B cell (primary cell): ENCODE measurements at regions of chr17 and their contacts with region 1.

Region 1: GRCh38 chr17:76467366-76467765 is at the start of gene AANAT:
- DNase-seq: no peak
- ATAC-seq: no peak
- H3K4me3 ChIP-seq: no peak within 1 kb of the TSS
- H3K4me3 Mint-ChIP-seq: no peak within 1 kb of the TSS
- H3K27ac ChIP-seq: peak within 1 kb of the TSS in 1 of 2 donors; percentile 23
- H3K27ac Mint-ChIP-seq: peak within 1 kb of the TSS; percentile 84
- H3K4me1 ChIP-seq: peaks cover 12 to 36% of the 10 kb centered on the region in 2 donors
- H3K4me1 Mint-ChIP-seq: peaks cover 35% of the 10 kb centered on the region
- H3K27me3 ChIP-seq: no peaks in the 10 kb centered on the region
- H3K27me3 Mint-ChIP-seq: no peaks in the 10 kb centered on the region
- CTCF ChIP-seq: no peak
- total RNA-seq, gene AANAT: 0.94 TPM in 1 of 2 replicates, not detected in the other

Region 2: DNA sequence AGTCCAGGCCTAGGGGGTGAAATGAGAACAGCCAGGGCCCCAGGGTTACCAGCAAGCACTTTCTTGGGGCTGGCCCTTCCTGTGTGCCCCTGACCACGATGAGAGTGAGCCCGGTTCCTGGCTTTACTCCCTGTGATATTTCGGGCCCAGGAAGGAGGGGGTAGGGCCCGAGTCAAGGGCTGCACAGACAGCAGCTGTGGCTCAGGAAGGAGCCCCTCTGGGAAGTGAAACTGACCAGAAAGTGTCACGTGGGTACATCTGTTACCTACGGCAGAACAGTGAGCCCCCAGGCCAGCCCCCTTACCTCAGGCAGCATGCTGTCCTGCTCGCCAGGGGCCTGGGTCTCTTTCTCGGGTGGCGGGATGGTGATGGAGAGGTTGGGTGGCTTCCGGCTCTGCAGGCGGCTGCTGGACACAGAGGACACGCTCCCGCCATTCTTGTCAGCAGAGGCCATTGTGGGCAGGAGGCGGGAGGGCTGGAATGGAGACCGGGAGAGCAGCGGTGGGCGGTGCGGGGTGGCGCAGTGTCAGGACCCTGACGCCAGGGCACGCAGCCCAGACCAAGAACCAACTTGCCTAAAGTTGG is 13.8 kb after region 1 on chr17:
- CTCF ChIA-PET with region 1: interaction called, 25 read pairs
- POLR2A ChIA-PET with region 1: interaction called, 13 read pairs
- intact Hi-C with region 1: loop called (anchors 1 kb)
- DNase-seq: peak; percentile 88
- ATAC-seq: peak; percentile 57
- H3K4me3 ChIP-seq: peak overlapping the region; percentile 15 to 70 (median 53)
- H3K4me3 Mint-ChIP-seq: peak overlapping the region; percentile 81
- H3K27ac ChIP-seq: peak overlapping the region; percentile 91 to 96
- H3K27ac Mint-ChIP-seq: peak overlapping the region; percentile 99
- H3K4me1 ChIP-seq: peaks cover 63 to 87% of the 10 kb centered on the region in 2 donors
- H3K4me1 Mint-ChIP-seq: peaks cover 67% of the 10 kb centered on the region
- H3K27me3 ChIP-seq: no peaks in the 10 kb centered on the region
- H3K27me3 Mint-ChIP-seq: no peaks in the 10 kb centered on the region
- CTCF ChIP-seq: no peak

Region 3: GRCh38 chr17:76492989-76493501 is 25.7 kb after region 1 on chr17:
- CTCF ChIA-PET with region 1: interaction called, 442 read pairs
- POLR2A ChIA-PET with region 1: interaction called, 478 read pairs
- intact Hi-C with region 1: no loop called
- DNase-seq: peak; percentile 83
- ATAC-seq: peak; percentile 50
- H3K4me3 ChIP-seq: peak overlapping the region; percentile 16 to 60 (median 50)
- H3K4me3 Mint-ChIP-seq: peak overlapping the region; percentile 89
- H3K27ac ChIP-seq: peak overlapping the region; percentile 75 to 94
- H3K27ac Mint-ChIP-seq: peak overlapping the region; percentile 98
- H3K4me1 ChIP-seq: peaks cover 87 to 98% of the 10 kb centered on the region in 2 donors
- H3K4me1 Mint-ChIP-seq: peaks cover 93% of the 10 kb centered on the region
- H3K27me3 ChIP-seq: no peaks in the 10 kb centered on the region
- H3K27me3 Mint-ChIP-seq: no peaks in the 10 kb centered on the region
- CTCF ChIP-seq: no peak

Region 4: GRCh38 chr17:76501018-76501826 is 33.9 kb after region 1 on chr17 and contains the start of gene RHBDF2:
- CTCF ChIA-PET with region 1: interaction called, 442 read pairs
- POLR2A ChIA-PET with region 1: interaction called, 478 read pairs
- intact Hi-C with region 1: loop called (anchors 1 kb)
- DNase-seq: peak; percentile 95
- ATAC-seq: peak; percentile 85
- H3K4me3 ChIP-seq: peak within 1 kb of the TSS; percentile 46 to 97 (median 95)
- H3K4me3 Mint-ChIP-seq: peak within 1 kb of the TSS; percentile 97
- H3K27ac ChIP-seq: peak within 1 kb of the TSS; percentile 78 to 94
- H3K27ac Mint-ChIP-seq: peak within 1 kb of the TSS; percentile 99
- H3K4me1 ChIP-seq: peaks cover 38 to 63% of the 10 kb centered on the region in 2 donors
- H3K4me1 Mint-ChIP-seq: peaks cover 56% of the 10 kb centered on the region
- H3K27me3 ChIP-seq: no peaks in the 10 kb centered on the region
- H3K27me3 Mint-ChIP-seq: no peaks in the 10 kb centered on the region
- CTCF ChIP-seq: no peak
- total RNA-seq, gene RHBDF2: 482 and 509 TPM in 2 replicates

Region 5: DNA sequence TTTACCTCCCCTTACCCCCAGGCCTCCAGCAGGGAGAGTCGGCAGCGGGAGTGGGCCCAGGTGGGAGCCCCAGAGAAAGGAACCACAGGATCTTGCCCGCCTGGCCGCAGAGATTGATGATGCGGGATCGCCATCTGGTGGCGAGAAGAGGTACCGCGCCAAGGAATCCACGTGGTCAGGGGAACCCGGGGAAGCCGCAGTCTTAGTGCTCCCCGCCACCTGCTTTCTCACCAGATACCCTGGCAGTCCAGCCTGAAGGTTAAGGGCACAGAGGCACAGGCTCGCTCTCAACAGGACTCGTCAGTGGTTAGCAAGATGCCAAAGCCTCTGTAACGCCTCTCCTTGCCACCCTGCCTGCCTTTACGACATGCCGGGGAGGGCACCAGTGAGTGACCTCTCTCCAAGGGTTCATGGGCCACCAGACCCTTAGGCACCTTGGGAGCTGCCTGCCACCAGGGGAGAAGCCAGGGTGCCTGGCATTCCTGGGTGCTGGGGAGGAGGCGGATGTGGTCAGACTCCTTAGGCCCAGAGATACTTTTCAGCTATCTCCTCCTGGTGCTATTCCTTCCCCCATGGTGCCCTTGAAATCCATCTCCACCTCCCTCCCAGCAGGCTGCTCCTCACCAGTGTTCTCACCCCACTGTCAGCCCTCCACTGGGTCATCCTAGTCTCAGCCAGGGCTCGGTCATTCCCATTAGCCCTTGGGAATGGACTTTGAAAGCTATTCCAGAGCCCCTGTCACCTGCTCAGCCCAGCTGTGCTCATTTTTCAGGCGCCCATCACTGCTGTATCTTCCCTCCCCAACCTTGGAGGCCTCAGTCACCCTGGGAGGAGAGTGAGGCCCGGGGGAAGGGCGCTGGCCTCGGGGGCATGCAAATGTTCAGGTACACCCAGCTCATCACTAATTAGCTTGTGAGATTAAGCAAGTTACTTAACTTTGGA is 39.3 kb after region 1 on chr17:
- CTCF ChIA-PET with region 1: interaction called, 442 read pairs
- POLR2A ChIA-PET with region 1: interaction called, 478 read pairs
- intact Hi-C with region 1: loop called (anchors 1 kb)
- DNase-seq: peak; percentile 92
- ATAC-seq: peak; percentile 73
- H3K4me3 ChIP-seq: no peak overlapping the region
- H3K4me3 Mint-ChIP-seq: no peak overlapping the region
- H3K27ac ChIP-seq: no peak overlapping the region
- H3K27ac Mint-ChIP-seq: peak overlapping the region; percentile 50
- H3K4me1 ChIP-seq: peaks cover 14 to 28% of the 10 kb centered on the region in 2 donors
- H3K4me1 Mint-ChIP-seq: peaks cover 28% of the 10 kb centered on the region
- H3K27me3 ChIP-seq: no peaks in the 10 kb centered on the region
- H3K27me3 Mint-ChIP-seq: peaks cover 2% of the 10 kb centered on the region
- CTCF ChIP-seq: peak; percentile 87

Region 6: DNA sequence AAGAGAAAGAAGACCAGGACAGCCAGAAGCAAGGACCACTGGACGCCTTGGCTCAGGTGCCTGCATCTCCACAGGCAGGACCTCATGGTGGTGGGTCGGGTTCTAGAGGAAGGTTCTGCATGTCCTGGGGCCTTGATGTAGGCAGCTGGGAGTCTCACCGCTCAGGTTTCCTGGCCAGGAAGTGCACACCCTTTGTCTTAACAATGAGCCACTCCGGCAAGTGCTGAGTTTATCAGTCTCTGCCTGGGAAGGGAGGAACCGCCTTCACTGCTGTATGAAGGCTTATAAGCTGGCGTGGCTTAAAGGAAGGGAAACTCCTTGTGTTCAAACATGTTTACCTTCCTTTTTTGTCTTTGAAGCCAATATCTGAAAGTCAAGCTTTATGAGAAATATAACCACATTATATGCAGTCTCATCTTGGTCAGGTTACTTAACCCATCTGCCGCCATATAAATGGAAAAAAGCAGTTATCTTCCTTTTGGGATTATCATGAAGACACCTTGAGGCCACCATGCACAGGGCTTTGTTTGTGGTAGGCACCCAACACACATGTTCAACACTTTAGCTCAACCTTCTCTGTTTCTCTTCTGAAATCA is 176.3 kb after region 1 on chr17 and contains the start of gene ST6GALNAC1:
- CTCF ChIA-PET with region 1: no interaction called
- POLR2A ChIA-PET with region 1: no interaction called
- intact Hi-C with region 1: no loop called
- DNase-seq: no peak
- ATAC-seq: no peak
- H3K4me3 ChIP-seq: no peak within 1 kb of the TSS
- H3K4me3 Mint-ChIP-seq: no peak within 1 kb of the TSS
- H3K27ac ChIP-seq: no peak within 1 kb of the TSS
- H3K27ac Mint-ChIP-seq: no peak within 1 kb of the TSS
- H3K4me1 ChIP-seq: no peaks in the 10 kb centered on the region
- H3K4me1 Mint-ChIP-seq: no peaks in the 10 kb centered on the region
- H3K27me3 ChIP-seq: peaks cover 0 to 20% (median 7%) of the 10 kb centered on the region in 4 experiments
- H3K27me3 Mint-ChIP-seq: peaks cover 27% of the 10 kb centered on the region
- CTCF ChIP-seq: no peak
- total RNA-seq, gene ST6GALNAC1: not detected in 2 replicates